Esophagus muscularis mucosa (tissue), 4 donors: ENCODE measurements at regions of chr21 and their contacts with region 1.

Region 1: GRCh38 chr21:20999659-21000058 is 1.4 kb downstream of the NCAM2 start:
- DNase-seq: no peak
- H3K4me3 ChIP-seq: peak overlapping the region in 2 of 4 donors; percentile 6 to 58
- H3K27ac ChIP-seq: no peak overlapping the region
- H3K4me1 ChIP-seq: peaks cover 12 to 28% (median 23%) of the 10 kb centered on the region in 4 donors
- H3K27me3 ChIP-seq: peaks cover 0 to 15% (median 3%) of the 10 kb centered on the region in 4 donors
- CTCF ChIP-seq: peak; percentile 57 to 78 (median 59)
- EP300 ChIP-seq: no peak
- POLR2A ChIP-seq: no peak

Region 2: DNA sequence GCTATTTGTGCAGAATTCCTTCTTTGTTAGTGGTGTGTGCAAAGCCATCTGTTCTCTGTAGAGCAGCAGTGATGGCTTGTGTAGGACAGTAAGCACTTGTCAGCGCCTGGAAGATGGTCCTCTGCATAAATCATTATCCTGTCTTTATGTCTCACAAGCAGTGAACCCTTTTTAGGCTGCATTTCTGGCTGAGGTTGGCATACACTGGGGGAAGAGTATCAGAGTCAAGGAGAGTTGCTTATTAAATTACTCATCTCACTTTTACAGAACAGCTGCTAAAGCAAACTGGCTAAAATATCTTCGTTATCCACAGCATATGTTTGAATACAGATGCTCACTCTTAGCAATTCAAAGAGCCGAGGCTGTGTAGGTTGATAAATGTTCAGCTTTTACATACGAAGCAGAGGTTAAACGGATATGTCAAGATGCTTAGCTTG is 56.1 kb before region 1 on chr21:
- intact Hi-C with region 1: no loop called
- DNase-seq: no peak
- H3K4me3 ChIP-seq: no peak overlapping the region
- H3K27ac ChIP-seq: no peak overlapping the region
- H3K4me1 ChIP-seq: no peaks in the 10 kb centered on the region
- H3K27me3 ChIP-seq: no peaks in the 10 kb centered on the region
- CTCF ChIP-seq: no peak
- EP300 ChIP-seq: no peak
- POLR2A ChIP-seq: no peak

Region 3: GRCh38 chr21:21921421-21922232 is 922.0 kb after region 1 on chr21:
- intact Hi-C with region 1: loop called (anchors 5 kb)
- DNase-seq: no peak
- H3K4me3 ChIP-seq: no peak overlapping the region
- H3K27ac ChIP-seq: no peak overlapping the region
- H3K4me1 ChIP-seq: no peaks in the 10 kb centered on the region
- H3K27me3 ChIP-seq: no peaks in the 10 kb centered on the region
- CTCF ChIP-seq: peak in 1 of 3 experiments; percentile 46
- EP300 ChIP-seq: no peak
- POLR2A ChIP-seq: no peak

Region 4: DNA sequence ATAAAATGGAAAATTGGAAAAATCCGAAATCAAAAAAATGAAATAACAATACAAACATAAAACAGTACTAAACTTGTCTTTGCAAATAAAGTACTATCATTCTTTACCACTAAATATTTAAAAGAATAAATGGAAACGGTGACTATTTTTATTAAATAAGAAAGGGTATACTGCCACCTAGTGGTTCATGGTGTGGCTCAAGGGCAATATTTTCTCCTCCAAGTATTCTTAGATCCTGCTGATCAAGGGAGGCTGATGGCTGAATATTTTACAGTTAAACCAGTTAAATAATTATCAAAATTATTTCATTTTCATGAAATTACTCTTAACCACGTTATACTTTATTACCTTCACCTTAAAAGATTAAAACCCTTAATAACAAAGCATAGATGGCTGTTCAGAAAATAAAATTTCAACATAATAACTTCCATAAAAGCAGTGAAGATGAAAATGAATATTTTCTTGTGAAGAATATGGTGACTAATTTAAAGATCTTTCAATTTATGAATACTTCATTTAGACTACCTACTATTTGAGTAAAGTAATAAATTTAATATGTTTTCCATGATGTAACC is 1792.4 kb after region 1 on chr21:
- intact Hi-C with region 1: loop called (anchors 5 kb)
- DNase-seq: no peak
- H3K4me3 ChIP-seq: no peak overlapping the region
- H3K27ac ChIP-seq: no peak overlapping the region
- H3K4me1 ChIP-seq: no peaks in the 10 kb centered on the region
- H3K27me3 ChIP-seq: no peaks in the 10 kb centered on the region
- CTCF ChIP-seq: peak; percentile 53 to 77 (median 71)
- EP300 ChIP-seq: no peak
- POLR2A ChIP-seq: no peak